ENCODE measurements at regions of chr7 and their contacts with region 1.

Region 1: DNA sequence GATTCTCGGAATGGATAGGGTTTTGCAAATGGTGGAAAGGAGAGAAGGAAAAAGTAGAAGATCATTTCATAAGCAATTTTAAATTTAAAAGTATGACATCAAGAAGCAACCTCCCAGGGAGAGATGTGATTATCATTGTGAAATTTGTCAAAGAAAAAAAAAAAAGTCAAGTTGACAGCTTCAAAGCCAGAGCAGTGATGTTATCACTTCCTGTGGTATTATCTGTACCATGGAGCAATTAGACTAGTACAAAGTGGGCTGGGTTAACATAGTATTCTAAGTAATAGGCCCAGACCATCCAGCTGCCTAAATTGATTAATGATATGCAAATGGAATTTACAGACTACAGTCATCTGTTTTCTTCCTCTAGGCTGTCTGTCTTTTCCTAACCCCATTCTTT is 84.0 kb upstream of the NPY start:
- DNase-seq: no peak
- ATAC-seq: no peak
- H3K4me3 ChIP-seq: no peak overlapping the region
- H3K27ac ChIP-seq: no peak overlapping the region
- H3K4me1 ChIP-seq: no peaks in the 10 kb centered on the region
- H3K27me3 ChIP-seq: no peaks in the 10 kb centered on the region
- CTCF ChIP-seq: no peak

Region 2: DNA sequence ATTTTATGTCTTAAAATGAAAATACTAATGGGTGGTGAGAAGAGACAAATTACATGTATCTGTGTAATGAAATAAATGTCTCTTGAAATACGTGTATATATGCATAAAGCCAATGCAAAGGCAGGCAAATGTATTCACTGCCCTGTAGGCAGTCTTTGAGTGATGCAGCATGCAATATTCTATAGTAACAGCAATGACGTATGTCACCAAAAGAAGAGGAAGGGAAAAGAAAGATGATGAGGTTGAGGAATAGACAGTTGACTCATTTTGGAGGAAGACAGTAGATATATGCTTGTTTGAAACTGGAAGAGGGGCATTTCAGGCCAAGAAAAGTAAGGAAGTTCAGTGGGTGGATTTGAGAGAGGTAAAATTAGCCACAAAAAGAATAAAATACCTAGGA is 362.3 kb before region 1 on chr7:
- CTCF ChIA-PET with region 1: no interaction called
- POLR2A ChIA-PET with region 1: no interaction called
- intact Hi-C with region 1: loop called (anchors 5 kb)
- DNase-seq: no peak
- ATAC-seq: no peak
- H3K4me3 ChIP-seq: no peak overlapping the region
- H3K27ac ChIP-seq: no peak overlapping the region
- H3K4me1 ChIP-seq: no peaks in the 10 kb centered on the region
- H3K27me3 ChIP-seq: no peaks in the 10 kb centered on the region
- CTCF ChIP-seq: no peak